ENCODE measurements at regions of chr10 and their contacts with region 1.

Region 1: GRCh38 chr10:45235798-45236231 is 79.6 kb downstream of the OR13A1 start:
- DNase-seq: no peak
- H3K4me3 ChIP-seq: no peak overlapping the region
- H3K27ac ChIP-seq: no peak overlapping the region
- H3K4me1 ChIP-seq: no peaks in the 10 kb centered on the region
- H3K27me3 ChIP-seq: no peaks in the 10 kb centered on the region
- CTCF ChIP-seq: no peak

Region 2: GRCh38 chr10:44932517-44933450 is 303.0 kb before region 1 on chr10:
- CTCF ChIA-PET with region 1: no interaction called
- POLR2A ChIA-PET with region 1: no interaction called
- intact Hi-C with region 1: loop called (anchors 2 kb)
- DNase-seq: peak; percentile 52 to 86
- H3K4me3 ChIP-seq: no peak overlapping the region
- H3K27ac ChIP-seq: no peak overlapping the region
- H3K4me1 ChIP-seq: no peaks in the 10 kb centered on the region
- H3K27me3 ChIP-seq: 0 out of 2 replicates have a peak, but pooled peaks cover 6% of the 10 kb centered on the region
- CTCF ChIP-seq: peak; percentile 97

Region 3: GRCh38 chr10:45008524-45009161 is 227.2 kb before region 1 on chr10:
- CTCF ChIA-PET with region 1: no interaction called
- POLR2A ChIA-PET with region 1: no interaction called
- intact Hi-C with region 1: loop called (anchors 5 kb)
- DNase-seq: peak; percentile 54 to 84
- H3K4me3 ChIP-seq: no peak overlapping the region
- H3K27ac ChIP-seq: no peak overlapping the region
- H3K4me1 ChIP-seq: no peaks in the 10 kb centered on the region
- H3K27me3 ChIP-seq: no peaks in the 10 kb centered on the region
- CTCF ChIP-seq: peak; percentile 92

Region 4: GRCh38 chr10:46030091-46030937 is 794.5 kb after region 1 on chr10 and contains the start of gene NCOA4:
- CTCF ChIA-PET with region 1: no interaction called
- POLR2A ChIA-PET with region 1: no interaction called
- intact Hi-C with region 1: loop called (anchors 5 kb)
- DNase-seq: peak; percentile 91 to 96
- H3K4me3 ChIP-seq: peak within 1 kb of the TSS; percentile 97
- H3K27ac ChIP-seq: peak within 1 kb of the TSS; percentile 62
- H3K4me1 ChIP-seq: peaks cover 28% of the 10 kb centered on the region
- H3K27me3 ChIP-seq: no peaks in the 10 kb centered on the region
- CTCF ChIP-seq: peak; percentile 77
- total RNA-seq, gene NCOA4: 142 and 143 TPM in 2 replicates

Region 5: GRCh38 chr10:46228563-46229071 is 992.8 kb after region 1 on chr10:
- CTCF ChIA-PET with region 1: no interaction called
- POLR2A ChIA-PET with region 1: no interaction called
- intact Hi-C with region 1: loop called (anchors 10 kb)
- DNase-seq: peak; percentile 60 to 84
- H3K4me3 ChIP-seq: no peak overlapping the region
- H3K27ac ChIP-seq: no peak overlapping the region
- H3K4me1 ChIP-seq: peaks cover 24% of the 10 kb centered on the region
- H3K27me3 ChIP-seq: no peaks in the 10 kb centered on the region
- CTCF ChIP-seq: peak; percentile 87

Measured in PC-9 (cell line).